WTC11 (cell line): ENCODE measurements at regions of chr10 and their contacts with region 1.

Region 1: DNA sequence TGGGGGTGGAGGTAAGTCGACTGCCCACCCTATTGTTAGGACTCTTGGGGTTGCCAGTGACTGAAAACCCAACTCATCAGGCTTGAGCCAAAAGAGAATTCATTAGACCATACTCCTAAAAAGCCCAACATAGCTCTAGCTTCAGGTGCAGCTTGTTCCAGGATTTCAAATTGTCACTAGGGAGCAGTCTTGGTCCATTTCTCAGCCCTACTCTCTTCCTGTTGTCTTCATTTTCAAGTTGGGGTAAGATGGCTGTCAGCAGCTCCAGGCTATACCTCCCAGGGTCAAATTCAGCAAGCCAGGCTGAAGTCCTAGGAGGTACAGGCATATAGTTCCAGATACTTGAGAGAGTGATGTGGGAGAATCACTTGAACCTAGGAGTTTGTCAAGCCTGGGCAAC is 14.9 kb upstream of the COL13A1 start:
- DNase-seq: no peak
- ATAC-seq: peak; percentile 85
- H3K4me3 Mint-ChIP-seq: no peak overlapping the region
- H3K27ac Mint-ChIP-seq: no peak overlapping the region
- H3K4me1 Mint-ChIP-seq: no peaks in the 10 kb centered on the region
- H3K27me3 Mint-ChIP-seq: peaks cover 17% of the 10 kb centered on the region
- CTCF ChIP-seq: no peak

Region 2: GRCh38 chr10:69742928-69743602 is 43.7 kb before region 1 on chr10:
- CTCF ChIA-PET with region 1: interaction called, 36 read pairs
- POLR2A ChIA-PET with region 1: no interaction called
- DNase-seq: peak; percentile 79
- ATAC-seq: peak; percentile 92
- H3K4me3 Mint-ChIP-seq: no peak overlapping the region
- H3K27ac Mint-ChIP-seq: no peak overlapping the region
- H3K4me1 Mint-ChIP-seq: 0 out of 2 replicates have a peak, but pooled peaks cover 6% of the 10 kb centered on the region
- H3K27me3 Mint-ChIP-seq: peaks cover 4% of the 10 kb centered on the region
- CTCF ChIP-seq: 0 out of 2 replicates have a peak, but pooled peaks have one; percentile 28

Region 3: DNA sequence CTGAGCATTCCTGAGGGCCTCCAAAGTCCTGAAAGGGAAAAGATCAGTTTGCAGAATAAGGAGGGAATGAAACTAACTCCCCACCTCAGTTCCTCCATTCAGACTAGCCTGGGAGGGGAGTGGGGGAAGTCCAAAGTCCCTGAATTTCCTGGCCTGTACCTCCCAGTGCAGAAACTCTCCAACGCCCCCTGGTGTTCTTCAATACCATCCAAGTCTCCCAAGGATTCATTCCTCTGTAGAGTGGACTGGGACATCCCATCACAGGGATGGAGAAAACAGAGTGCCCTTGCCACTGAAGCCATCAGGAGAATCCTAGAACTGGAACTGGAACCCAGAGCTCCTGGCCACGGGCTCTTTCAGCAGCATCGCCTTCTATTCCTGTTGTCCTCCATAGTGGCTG is 13.3 kb after region 1 on chr10:
- CTCF ChIA-PET with region 1: interaction called, 94 read pairs
- POLR2A ChIA-PET with region 1: no interaction called
- DNase-seq: peak; percentile 72
- ATAC-seq: peak; percentile 58
- H3K4me3 Mint-ChIP-seq: no peak overlapping the region; the same call in 1 of the 2 replicates
- H3K27ac Mint-ChIP-seq: no peak overlapping the region
- H3K4me1 Mint-ChIP-seq: peaks cover 37% of the 10 kb centered on the region
- H3K27me3 Mint-ChIP-seq: peaks cover 74% of the 10 kb centered on the region
- CTCF ChIP-seq: peak; percentile 48; the same call in 1 of the 2 replicates

Region 4: GRCh38 chr10:69869291-69869961 is 82.6 kb after region 1 on chr10:
- CTCF ChIA-PET with region 1: interaction called, 21 read pairs
- POLR2A ChIA-PET with region 1: no interaction called
- DNase-seq: no peak
- ATAC-seq: no peak
- H3K4me3 Mint-ChIP-seq: no peak overlapping the region
- H3K27ac Mint-ChIP-seq: no peak overlapping the region
- H3K4me1 Mint-ChIP-seq: peaks cover 93% of the 10 kb centered on the region
- H3K27me3 Mint-ChIP-seq: peaks cover 18% of the 10 kb centered on the region
- CTCF ChIP-seq: no peak

Region 5: GRCh38 chr10:69901628-69902505 is 115.1 kb after region 1 on chr10:
- CTCF ChIA-PET with region 1: interaction called, 12 read pairs
- POLR2A ChIA-PET with region 1: no interaction called
- DNase-seq: peak; percentile 77
- ATAC-seq: peak; percentile 86
- H3K4me3 Mint-ChIP-seq: no peak overlapping the region
- H3K27ac Mint-ChIP-seq: peak overlapping the region; percentile 86
- H3K4me1 Mint-ChIP-seq: peaks cover 35% of the 10 kb centered on the region
- H3K27me3 Mint-ChIP-seq: peaks cover 3% of the 10 kb centered on the region
- CTCF ChIP-seq: peak; percentile 61; the same call in 1 of the 2 replicates

Region 6: DNA sequence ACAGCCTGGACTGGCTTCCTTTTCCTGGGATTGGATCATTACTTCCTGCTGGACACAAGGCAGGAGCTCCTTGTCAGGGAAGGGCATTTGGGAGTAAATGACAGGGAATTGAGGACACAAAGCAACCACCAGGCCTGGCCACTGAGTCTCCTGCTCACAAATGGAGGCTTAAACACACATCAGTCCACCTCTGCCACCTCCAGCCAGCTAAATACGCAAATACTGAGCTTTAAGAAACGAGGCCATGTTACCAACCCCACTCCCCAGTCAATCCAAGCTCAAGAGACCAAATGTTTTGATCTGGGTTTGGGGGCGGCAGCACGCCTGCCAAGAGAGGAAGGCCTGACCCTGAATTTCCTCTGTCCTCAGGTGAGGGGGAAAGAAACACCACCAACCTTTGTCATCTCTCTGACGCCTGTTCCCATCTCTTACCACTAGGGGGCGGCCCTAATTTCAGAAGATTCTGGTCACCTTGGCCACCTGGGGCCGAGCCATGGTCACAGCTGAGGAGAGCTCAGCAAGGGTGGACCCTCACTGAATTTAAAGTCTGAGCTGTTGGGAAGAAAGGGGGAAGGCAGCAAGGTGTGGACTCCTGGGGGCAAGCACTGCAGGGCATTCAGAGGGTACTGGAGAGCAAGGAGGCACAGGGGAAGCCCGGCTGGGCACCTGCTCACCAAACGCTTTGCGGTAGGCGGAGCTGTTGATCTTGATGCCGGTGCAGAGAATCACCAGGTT is 329.3 kb after region 1 on chr10:
- CTCF ChIA-PET with region 1: interaction called, 10 read pairs
- POLR2A ChIA-PET with region 1: no interaction called
- DNase-seq: peak; percentile 77
- ATAC-seq: peak; percentile 85
- H3K4me3 Mint-ChIP-seq: no peak overlapping the region
- H3K27ac Mint-ChIP-seq: 0 out of 2 replicates have a peak overlapping the region, but pooled peaks have one; percentile 30
- H3K4me1 Mint-ChIP-seq: peaks cover 10% of the 10 kb centered on the region; the same call in 1 of the 2 replicates
- H3K27me3 Mint-ChIP-seq: no peaks in the 10 kb centered on the region
- CTCF ChIP-seq: peak; percentile 92